WTC11 (cell line): ENCODE measurements at regions of chr20 and their contacts with region 1.

Region 1: GRCh38 chr20:36886859-36887751 is 11.2 kb downstream of the TLDC2 start:
- DNase-seq: peak; percentile 96
- ATAC-seq: peak; percentile 90
- H3K4me3 Mint-ChIP-seq: peak overlapping the region; percentile 36
- H3K27ac Mint-ChIP-seq: peak overlapping the region; percentile 61
- H3K4me1 Mint-ChIP-seq: peaks cover 20% of the 10 kb centered on the region
- H3K27me3 Mint-ChIP-seq: no peaks in the 10 kb centered on the region; the same call in 1 of the 2 replicates
- CTCF ChIP-seq: peak; percentile 96

Region 2: DNA sequence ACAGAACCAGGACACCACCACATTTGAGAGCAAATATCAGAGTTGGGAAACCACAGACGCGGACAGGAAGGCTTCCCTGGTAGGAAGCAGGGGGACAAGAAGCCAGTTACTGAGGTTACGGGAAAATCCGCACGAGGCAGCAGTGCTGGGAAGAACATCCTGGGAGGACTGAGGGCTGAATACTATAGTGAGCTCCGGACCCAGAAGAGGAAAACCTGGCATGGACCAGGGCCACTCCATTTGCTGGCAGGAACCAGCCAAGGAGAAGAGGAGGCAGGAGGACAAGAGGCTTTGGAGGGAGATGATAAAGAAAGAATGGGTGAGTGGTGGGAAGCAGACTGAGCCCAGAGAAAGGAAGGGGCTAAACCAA is 107.5 kb before region 1 on chr20:
- CTCF ChIA-PET with region 1: no interaction called
- POLR2A ChIA-PET with region 1: no interaction called
- DNase-seq: peak; percentile 42
- ATAC-seq: peak; percentile 84
- H3K4me3 Mint-ChIP-seq: no peak overlapping the region
- H3K27ac Mint-ChIP-seq: no peak overlapping the region
- H3K4me1 Mint-ChIP-seq: peaks cover 12% of the 10 kb centered on the region
- H3K27me3 Mint-ChIP-seq: no peaks in the 10 kb centered on the region; the same call in 1 of the 2 replicates
- CTCF ChIP-seq: no peak

Region 3: GRCh38 chr20:36792422-36792821 is 94.7 kb before region 1 on chr20:
- CTCF ChIA-PET with region 1: interaction called, 13 read pairs
- POLR2A ChIA-PET with region 1: no interaction called
- DNase-seq: peak; percentile 73
- ATAC-seq: peak; percentile 98
- H3K4me3 Mint-ChIP-seq: no peak overlapping the region
- H3K27ac Mint-ChIP-seq: no peak overlapping the region
- H3K4me1 Mint-ChIP-seq: no peaks in the 10 kb centered on the region
- H3K27me3 Mint-ChIP-seq: no peaks in the 10 kb centered on the region
- CTCF ChIP-seq: no peak

Region 4: DNA sequence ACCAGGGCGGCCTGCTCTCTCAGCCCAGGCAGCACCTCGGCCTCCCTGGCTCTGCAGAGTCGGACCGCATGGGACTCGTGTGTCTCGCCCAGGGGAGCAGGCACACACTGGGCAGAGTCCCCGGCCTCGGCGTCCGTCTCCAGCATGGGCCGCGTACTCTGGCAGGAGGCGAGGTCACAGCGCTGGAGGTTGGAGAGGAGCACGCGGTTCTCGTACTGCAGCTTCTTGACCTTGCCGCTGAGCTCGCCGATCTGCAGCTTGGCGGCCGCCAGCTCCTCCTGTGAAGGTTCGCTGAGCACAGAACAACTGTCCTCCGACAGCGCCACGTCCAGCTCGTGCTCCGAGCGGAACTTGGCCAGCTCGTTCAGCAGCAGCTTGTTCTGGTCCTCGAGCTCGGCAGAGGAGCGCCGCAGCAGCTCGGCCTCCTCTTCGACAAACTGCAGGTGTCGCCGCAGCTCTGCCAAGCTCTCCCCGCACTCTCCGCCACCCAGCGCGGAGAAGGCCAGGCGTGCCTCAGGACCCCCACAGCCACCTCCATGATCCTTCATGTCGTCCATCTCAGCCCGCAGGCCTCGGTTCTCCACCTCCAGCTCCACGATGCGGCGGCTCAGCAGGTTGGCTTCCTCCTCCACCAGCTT is 71.5 kb before region 1 on chr20:
- CTCF ChIA-PET with region 1: interaction called, 11 read pairs
- POLR2A ChIA-PET with region 1: no interaction called
- DNase-seq: peak; percentile 43
- ATAC-seq: peak; percentile 57
- H3K4me3 Mint-ChIP-seq: no peak overlapping the region
- H3K27ac Mint-ChIP-seq: peak overlapping the region; percentile 11; the same call in 1 of the 2 replicates
- H3K4me1 Mint-ChIP-seq: peaks cover 22% of the 10 kb centered on the region
- H3K27me3 Mint-ChIP-seq: no peaks in the 10 kb centered on the region
- CTCF ChIP-seq: no peak